Naive thymus-derived CD4-positive, alpha-beta T cell (primary cell): ENCODE measurements at regions of chr20 and their contacts with region 1.

Region 1: GRCh38 chr20:24100385-24101011 is 111.9 kb upstream of the GGTLC1 start:
- DNase-seq: peak; percentile 18 to 71 (median 59)
- ATAC-seq: peak; percentile 95
- H3K4me3 ChIP-seq: no peak overlapping the region
- H3K4me3 Mint-ChIP-seq: no peak overlapping the region
- H3K27ac ChIP-seq: no peak overlapping the region
- H3K27ac Mint-ChIP-seq: peak overlapping the region in 7 of 9 donors; percentile 1 to 82 (median 57)
- H3K4me1 ChIP-seq: peaks cover 0 to 4% of the 10 kb centered on the region in 2 donors
- H3K4me1 Mint-ChIP-seq: peaks cover 5 to 18% (median 8%) of the 10 kb centered on the region in 7 donors
- H3K27me3 ChIP-seq: no peaks in the 10 kb centered on the region
- H3K27me3 Mint-ChIP-seq: peaks cover 0 to 5% (median 0%) of the 10 kb centered on the region in 5 donors

Region 2: DNA sequence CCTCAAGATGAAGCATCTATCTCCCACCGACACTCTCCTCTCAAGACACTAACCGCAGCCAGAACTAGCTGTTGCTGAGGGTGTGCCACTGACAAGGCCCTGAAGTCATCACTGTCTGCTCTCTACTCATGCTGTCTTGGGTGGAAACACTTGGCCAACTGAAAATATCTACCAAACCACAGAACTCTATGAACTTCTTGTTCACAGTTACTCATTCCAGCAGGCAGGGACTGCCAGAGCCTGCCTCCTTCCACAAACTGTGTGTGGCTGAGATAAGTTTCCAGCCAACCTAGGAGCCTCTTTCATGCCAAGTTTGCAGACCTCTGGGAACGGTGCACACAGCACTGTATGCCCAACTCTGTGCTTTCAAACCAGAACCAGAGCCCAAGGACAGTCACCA is 795.4 kb before region 1 on chr20:
- CTCF ChIA-PET with region 1: no interaction called
- POLR2A ChIA-PET with region 1: no interaction called
- intact Hi-C with region 1: no loop called
- DNase-seq: no peak
- ATAC-seq: no peak
- H3K4me3 ChIP-seq: no peak overlapping the region
- H3K4me3 Mint-ChIP-seq: no peak overlapping the region
- H3K27ac ChIP-seq: no peak overlapping the region
- H3K27ac Mint-ChIP-seq: no peak overlapping the region
- H3K4me1 ChIP-seq: no peaks in the 10 kb centered on the region
- H3K4me1 Mint-ChIP-seq: peaks cover 0 to 1% (median 0%) of the 10 kb centered on the region in 7 donors
- H3K27me3 ChIP-seq: no peaks in the 10 kb centered on the region
- H3K27me3 Mint-ChIP-seq: peaks cover 0 to 6% (median 0%) of the 10 kb centered on the region in 5 donors

Region 3: DNA sequence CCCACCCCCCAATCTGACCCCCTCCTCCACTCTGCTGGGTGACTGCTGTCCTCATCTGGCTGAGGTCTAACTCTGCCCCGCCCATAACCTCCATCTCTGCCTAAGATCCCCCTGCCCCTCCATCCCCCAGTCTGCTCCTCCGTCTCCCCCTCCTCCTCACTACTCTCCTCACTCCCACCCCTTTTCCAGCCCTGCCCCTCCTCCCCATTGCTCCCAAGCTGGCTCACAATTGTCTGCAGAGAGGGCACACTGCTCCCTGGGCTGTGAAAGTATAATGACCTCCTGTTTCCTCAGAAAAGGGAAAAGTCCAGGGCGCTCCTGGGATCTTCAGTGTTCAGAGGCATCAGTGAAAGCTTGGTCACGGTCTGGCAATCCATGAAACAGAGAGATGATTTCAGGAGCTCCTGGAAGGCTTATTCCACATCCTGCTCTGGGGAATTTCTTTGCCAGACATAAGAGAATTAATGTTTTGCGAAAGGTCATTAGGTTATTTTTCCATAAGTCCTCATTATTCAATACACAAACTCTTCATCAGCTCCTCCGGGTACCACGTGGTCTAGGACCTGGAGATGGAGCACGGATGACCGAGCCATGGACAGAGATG is 242.4 kb before region 1 on chr20:
- CTCF ChIA-PET with region 1: no interaction called
- POLR2A ChIA-PET with region 1: no interaction called
- intact Hi-C with region 1: no loop called
- DNase-seq: no peak
- ATAC-seq: no peak
- H3K4me3 ChIP-seq: no peak overlapping the region
- H3K4me3 Mint-ChIP-seq: no peak overlapping the region
- H3K27ac ChIP-seq: no peak overlapping the region
- H3K27ac Mint-ChIP-seq: no peak overlapping the region
- H3K4me1 ChIP-seq: no peaks in the 10 kb centered on the region
- H3K4me1 Mint-ChIP-seq: no peaks in the 10 kb centered on the region
- H3K27me3 ChIP-seq: no peaks in the 10 kb centered on the region
- H3K27me3 Mint-ChIP-seq: peaks cover 0 to 3% (median 0%) of the 10 kb centered on the region in 5 donors

Region 4: DNA sequence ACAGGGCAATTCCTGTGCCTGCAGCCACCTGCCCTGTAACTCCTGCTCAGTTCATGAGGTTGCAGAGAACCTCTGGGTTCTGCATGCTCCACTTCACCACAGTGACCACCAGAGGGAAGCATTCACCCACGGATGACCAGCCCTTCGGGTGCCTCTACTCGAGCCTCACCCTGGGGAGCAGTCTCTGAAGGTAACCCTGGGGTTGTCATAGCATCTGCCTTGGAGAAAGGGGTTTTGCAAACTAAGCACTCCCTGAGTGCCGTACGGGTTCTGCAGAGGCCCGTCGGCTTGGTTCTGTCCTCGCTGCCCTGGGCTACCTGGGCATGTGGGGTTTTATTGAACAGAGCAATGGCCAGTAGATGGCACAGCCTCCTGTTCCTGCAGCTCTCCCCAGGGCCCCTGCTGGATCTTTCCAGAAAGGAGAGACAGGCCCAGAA is 210.7 kb before region 1 on chr20:
- CTCF ChIA-PET with region 1: interaction called, 3 read pairs
- POLR2A ChIA-PET with region 1: no interaction called
- intact Hi-C with region 1: loop called (anchors 1 to 2 kb)
- DNase-seq: peak; percentile 49 to 79 (median 67)
- ATAC-seq: peak; percentile 94
- H3K4me3 ChIP-seq: no peak overlapping the region
- H3K4me3 Mint-ChIP-seq: no peak overlapping the region
- H3K27ac ChIP-seq: no peak overlapping the region
- H3K27ac Mint-ChIP-seq: no peak overlapping the region
- H3K4me1 ChIP-seq: no peaks in the 10 kb centered on the region
- H3K4me1 Mint-ChIP-seq: peaks cover 0 to 4% (median 0%) of the 10 kb centered on the region in 7 donors
- H3K27me3 ChIP-seq: no peaks in the 10 kb centered on the region
- H3K27me3 Mint-ChIP-seq: peaks cover 3 to 17% (median 10%) of the 10 kb centered on the region in 5 donors

Region 5: GRCh38 chr20:23995905-23996666 is 104.4 kb before region 1 on chr20:
- CTCF ChIA-PET with region 1: interaction called, 7 read pairs
- POLR2A ChIA-PET with region 1: no interaction called
- intact Hi-C with region 1: loop called (anchors 1 kb)
- DNase-seq: peak in 7 of 9 donors; percentile 20 to 61 (median 48)
- ATAC-seq: peak; percentile 57
- H3K4me3 ChIP-seq: no peak overlapping the region
- H3K4me3 Mint-ChIP-seq: peak overlapping the region in 1 of 10 donors; percentile 24
- H3K27ac ChIP-seq: no peak overlapping the region
- H3K27ac Mint-ChIP-seq: peak overlapping the region in 2 of 9 donors; percentile 1 to 9
- H3K4me1 ChIP-seq: no peaks in the 10 kb centered on the region
- H3K4me1 Mint-ChIP-seq: peaks cover 0 to 16% (median 5%) of the 10 kb centered on the region in 7 donors
- H3K27me3 ChIP-seq: no peaks in the 10 kb centered on the region
- H3K27me3 Mint-ChIP-seq: peaks cover 0 to 34% (median 0%) of the 10 kb centered on the region in 5 donors

Region 6: GRCh38 chr20:24045621-24046318 is 54.7 kb before region 1 on chr20:
- CTCF ChIA-PET with region 1: no interaction called
- POLR2A ChIA-PET with region 1: no interaction called
- intact Hi-C with region 1: loop called in 1 of 2 experiments (anchors 2 kb)
- DNase-seq: peak in 5 of 9 donors; percentile 30 to 48 (median 37)
- ATAC-seq: peak; percentile 67
- H3K4me3 ChIP-seq: peak overlapping the region; percentile 44
- H3K4me3 Mint-ChIP-seq: peak overlapping the region; percentile 31 to 78 (median 57)
- H3K27ac ChIP-seq: peak overlapping the region; percentile 60
- H3K27ac Mint-ChIP-seq: peak overlapping the region; percentile 76 to 95 (median 87)
- H3K4me1 ChIP-seq: peaks cover 12 to 37% of the 10 kb centered on the region in 2 donors
- H3K4me1 Mint-ChIP-seq: peaks cover 34 to 77% (median 64%) of the 10 kb centered on the region in 7 donors
- H3K27me3 ChIP-seq: no peaks in the 10 kb centered on the region
- H3K27me3 Mint-ChIP-seq: no peaks in the 10 kb centered on the region

Region 7: GRCh38 chr20:24781422-24781980 is 681.0 kb after region 1 on chr20:
- CTCF ChIA-PET with region 1: no interaction called
- POLR2A ChIA-PET with region 1: no interaction called
- intact Hi-C with region 1: loop called in 1 of 2 experiments (anchors 10 kb)
- DNase-seq: peak in 2 of 9 donors; percentile 11 to 16
- ATAC-seq: no peak
- H3K4me3 ChIP-seq: no peak overlapping the region
- H3K4me3 Mint-ChIP-seq: no peak overlapping the region
- H3K27ac ChIP-seq: no peak overlapping the region
- H3K27ac Mint-ChIP-seq: no peak overlapping the region
- H3K4me1 ChIP-seq: no peaks in the 10 kb centered on the region
- H3K4me1 Mint-ChIP-seq: peaks cover 0 to 17% (median 5%) of the 10 kb centered on the region in 7 donors
- H3K27me3 ChIP-seq: no peaks in the 10 kb centered on the region
- H3K27me3 Mint-ChIP-seq: peaks cover 15 to 25% (median 23%) of the 10 kb centered on the region in 5 donors

Region 8: GRCh38 chr20:25065625-25066338 is 965.3 kb after region 1 on chr20:
- CTCF ChIA-PET with region 1: no interaction called
- POLR2A ChIA-PET with region 1: no interaction called
- intact Hi-C with region 1: loop called in 1 of 2 experiments (anchors 1 kb)
- DNase-seq: peak in 8 of 9 donors; percentile 37 to 72 (median 68)
- ATAC-seq: peak; percentile 87
- H3K4me3 ChIP-seq: no peak overlapping the region
- H3K4me3 Mint-ChIP-seq: no peak overlapping the region
- H3K27ac ChIP-seq: no peak overlapping the region
- H3K27ac Mint-ChIP-seq: no peak overlapping the region
- H3K4me1 ChIP-seq: no peaks in the 10 kb centered on the region
- H3K4me1 Mint-ChIP-seq: peaks cover 0 to 8% (median 5%) of the 10 kb centered on the region in 7 donors
- H3K27me3 ChIP-seq: no peaks in the 10 kb centered on the region
- H3K27me3 Mint-ChIP-seq: peaks cover 0 to 51% (median 18%) of the 10 kb centered on the region in 5 donors